ENCODE measurements at regions of chr12 and their contacts with region 1.

Region 1: GRCh38 chr12:20798561-20798960 is 11.9 kb upstream of the SLCO1B3 start:
- DNase-seq: no peak
- ATAC-seq: peak in 3 of 4 donors; percentile 39 to 79 (median 74)
- H3K4me3 ChIP-seq: no peak overlapping the region
- H3K27ac ChIP-seq: no peak overlapping the region
- H3K4me1 ChIP-seq: peaks cover 0 to 4% (median 0%) of the 10 kb centered on the region in 12 donors
- H3K27me3 ChIP-seq: no peaks in the 10 kb centered on the region
- CTCF ChIP-seq: peak in 10 of 12 donors; percentile 31 to 60 (median 50)
- POLR2A ChIP-seq: no peak

Region 2: GRCh38 chr12:19739183-19739776 is 1059.3 kb before region 1 on chr12:
- intact Hi-C with region 1: loop called in 2 of 10 experiments (anchors 5 to 10 kb)
- DNase-seq: peak in 2 of 5 donors; percentile 39 to 40
- ATAC-seq: peak in 2 of 4 donors; percentile 61
- H3K4me3 ChIP-seq: no peak overlapping the region
- H3K27ac ChIP-seq: peak overlapping the region in 1 of 12 donors; percentile 7
- H3K4me1 ChIP-seq: peaks cover 0 to 25% (median 16%) of the 10 kb centered on the region in 12 donors
- H3K27me3 ChIP-seq: no peaks in the 10 kb centered on the region
- CTCF ChIP-seq: peak; percentile 39 to 79 (median 68)
- POLR2A ChIP-seq: no peak

Region 3: GRCh38 chr12:19744734-19745218 is 1053.8 kb before region 1 on chr12:
- intact Hi-C with region 1: loop called in 2 of 10 experiments (anchors 5 to 10 kb)
- DNase-seq: no peak
- ATAC-seq: peak; percentile 78 to 92 (median 89)
- H3K4me3 ChIP-seq: no peak overlapping the region
- H3K27ac ChIP-seq: peak overlapping the region in 9 of 12 donors; percentile 28 to 75 (median 61)
- H3K4me1 ChIP-seq: peaks cover 4 to 27% (median 20%) of the 10 kb centered on the region in 12 donors
- H3K27me3 ChIP-seq: no peaks in the 10 kb centered on the region
- CTCF ChIP-seq: no peak
- POLR2A ChIP-seq: no peak

Region 4: GRCh38 chr12:20620261-20620660 is 178.3 kb before region 1 on chr12:
- intact Hi-C with region 1: no loop called
- DNase-seq: no peak
- ATAC-seq: no peak
- H3K4me3 ChIP-seq: no peak overlapping the region
- H3K27ac ChIP-seq: no peak overlapping the region
- H3K4me1 ChIP-seq: peaks cover 0 to 9% (median 0%) of the 10 kb centered on the region in 12 donors
- H3K27me3 ChIP-seq: no peaks in the 10 kb centered on the region
- CTCF ChIP-seq: no peak
- POLR2A ChIP-seq: no peak

Region 5: GRCh38 chr12:20646239-20646827 is 152.2 kb before region 1 on chr12:
- intact Hi-C with region 1: loop called in 5 of 10 experiments (anchors 5 to 10 kb)
- DNase-seq: no peak
- ATAC-seq: peak in 3 of 4 donors; percentile 25 to 56 (median 36)
- H3K4me3 ChIP-seq: no peak overlapping the region
- H3K27ac ChIP-seq: no peak overlapping the region
- H3K4me1 ChIP-seq: peaks cover 0 to 10% (median 0%) of the 10 kb centered on the region in 12 donors
- H3K27me3 ChIP-seq: no peaks in the 10 kb centered on the region
- CTCF ChIP-seq: peak in 11 of 12 donors; percentile 24 to 63 (median 47)
- POLR2A ChIP-seq: no peak

Region 6: DNA sequence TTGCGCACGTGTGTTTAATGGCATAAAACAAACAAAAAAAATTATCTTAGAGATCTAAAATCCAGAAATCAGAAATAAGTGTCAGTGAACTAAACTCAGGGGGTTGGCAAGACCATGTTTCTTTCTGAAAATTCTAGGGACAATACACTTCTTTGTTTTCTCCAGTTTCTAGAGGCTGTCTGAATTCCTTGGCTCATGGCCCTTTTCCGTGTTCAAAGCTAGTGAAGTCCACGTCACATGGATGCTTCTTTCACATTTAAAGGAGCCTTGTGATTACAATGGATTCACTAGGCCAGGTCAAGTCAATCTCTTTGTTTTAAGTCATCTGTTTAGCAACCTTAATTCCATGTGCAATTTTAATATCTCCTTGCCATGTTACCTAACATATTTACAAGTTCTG is 34.4 kb after region 1 on chr12:
- intact Hi-C with region 1: no loop called
- DNase-seq: no peak
- ATAC-seq: no peak
- H3K4me3 ChIP-seq: no peak overlapping the region
- H3K27ac ChIP-seq: no peak overlapping the region
- H3K4me1 ChIP-seq: no peaks in the 10 kb centered on the region
- H3K27me3 ChIP-seq: no peaks in the 10 kb centered on the region
- CTCF ChIP-seq: no peak
- POLR2A ChIP-seq: no peak

Measured in heart left ventricle (tissue), 16 donors.